ENCODE measurements at regions of chr4 and their contacts with region 1.

Region 1: DNA sequence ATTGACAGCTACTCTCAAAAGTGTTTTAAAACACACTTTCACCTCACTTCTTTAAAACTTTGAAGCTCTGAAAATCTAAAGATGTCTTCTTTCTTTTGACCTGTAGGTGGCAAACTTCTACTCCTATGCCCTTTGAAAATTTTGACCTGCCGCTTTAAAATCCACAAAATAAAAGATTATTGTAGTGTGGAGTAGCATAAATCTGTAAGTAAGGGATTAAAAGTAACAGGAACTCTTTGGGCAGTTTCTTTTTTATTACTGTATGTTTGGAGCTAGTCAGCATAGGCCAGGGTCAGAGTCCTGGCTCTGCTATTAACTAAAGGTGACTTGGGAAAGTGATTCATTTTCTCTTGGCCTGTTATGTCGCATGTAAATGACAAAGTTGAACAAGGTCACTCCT is 25.5 kb downstream of the BBS12 start:
- DNase-seq: no peak
- H3K4me3 Mint-ChIP-seq: no peak overlapping the region
- H3K27ac Mint-ChIP-seq: peak overlapping the region; percentile 52
- H3K4me1 Mint-ChIP-seq: peaks cover 10% of the 10 kb centered on the region
- H3K27me3 Mint-ChIP-seq: no peaks in the 10 kb centered on the region
- CTCF ChIP-seq: peak; percentile 21

Region 2: DNA sequence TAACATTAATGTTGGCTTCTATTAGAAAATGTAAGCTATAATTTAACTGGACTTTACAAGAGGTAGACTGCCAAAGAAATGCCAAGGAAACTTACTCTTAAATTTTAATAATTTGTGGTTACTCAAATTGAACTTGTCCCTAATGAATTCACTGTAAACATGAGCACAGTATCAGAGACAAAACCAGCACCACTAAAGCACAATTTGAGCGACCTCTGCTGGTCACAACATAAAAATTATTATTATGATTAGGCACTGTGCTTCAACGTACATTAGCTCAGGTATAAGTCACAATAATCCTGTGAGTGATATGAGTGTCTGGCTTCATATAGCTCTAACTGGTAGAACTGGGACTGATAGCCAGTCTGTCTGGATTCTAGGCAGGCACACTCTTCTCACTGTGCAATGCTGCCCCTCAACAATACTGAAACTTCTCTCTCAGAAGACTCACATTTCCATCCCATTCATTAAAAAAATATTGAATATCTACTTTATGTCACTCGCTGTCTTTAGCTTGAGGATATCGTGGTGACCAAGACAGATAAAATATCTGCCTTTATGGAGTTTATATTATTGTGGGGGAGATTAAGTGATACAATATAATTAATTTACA is 156.4 kb after region 1 on chr4:
- CTCF ChIA-PET with region 1: interaction called, 14 read pairs
- intact Hi-C with region 1: loop called (anchors 2 kb)
- DNase-seq: no peak
- H3K4me3 Mint-ChIP-seq: no peak overlapping the region
- H3K27ac Mint-ChIP-seq: no peak overlapping the region
- H3K4me1 Mint-ChIP-seq: peaks cover 9% of the 10 kb centered on the region
- H3K27me3 Mint-ChIP-seq: no peaks in the 10 kb centered on the region
- CTCF ChIP-seq: no peak

Measured in Calu3 (cell line).